ENCODE measurements at regions of chr6 and their contacts with region 1.

Region 1: DNA sequence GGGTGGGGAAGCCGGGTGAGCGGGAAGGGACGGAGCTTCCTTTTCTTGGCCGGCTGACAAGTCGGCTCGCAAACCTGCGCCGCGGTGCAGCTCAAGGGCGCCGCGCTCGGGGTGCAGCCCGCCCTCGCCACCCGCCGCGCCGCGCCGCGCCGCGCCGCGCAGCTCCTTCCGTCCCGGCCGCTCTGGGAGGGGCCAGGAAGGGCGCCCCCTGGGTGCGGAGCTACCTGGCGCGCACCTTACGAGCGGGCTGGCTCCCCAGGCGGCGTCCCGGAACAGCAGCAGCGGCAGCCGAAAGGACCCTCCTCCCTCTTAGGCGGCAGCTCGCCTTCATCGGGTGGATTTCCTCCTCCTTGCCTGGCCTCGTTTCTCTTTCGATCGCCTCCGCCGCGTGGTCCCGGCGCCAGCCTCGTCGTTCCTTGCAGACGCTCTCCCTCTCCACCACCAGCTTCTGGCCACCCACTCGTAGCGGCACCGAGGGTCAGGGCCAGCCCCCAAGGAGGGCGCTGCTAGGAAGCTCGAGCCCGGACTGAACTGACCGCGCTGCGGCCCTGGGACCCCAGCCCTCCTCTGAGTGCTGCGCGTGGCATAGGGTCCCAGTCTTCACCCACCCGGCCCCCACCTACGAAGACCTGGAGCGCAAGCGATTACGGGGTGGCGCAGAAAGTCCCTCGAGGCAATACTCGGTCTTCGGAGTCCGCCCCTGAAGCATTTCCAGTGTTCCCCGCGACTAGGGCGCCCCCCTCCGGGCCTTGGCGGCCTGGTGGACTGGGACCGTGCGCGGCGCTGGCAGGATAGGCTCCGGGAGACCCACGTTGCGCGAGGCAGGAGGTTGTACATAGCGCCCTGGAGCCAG is at the start of gene MAP3K5:
- DNase-seq: peak; percentile 97
- ATAC-seq: peak; percentile 92
- H3K4me3 ChIP-seq: peak within 1 kb of the TSS; percentile 92
- H3K27ac ChIP-seq: peak within 1 kb of the TSS; percentile 98
- H3K4me1 ChIP-seq: peaks cover 14% of the 10 kb centered on the region
- H3K27me3 ChIP-seq: no peaks in the 10 kb centered on the region
- CTCF ChIP-seq: peak; percentile 83
- total RNA-seq, gene MAP3K5: 32.5 TPM

Region 2: DNA sequence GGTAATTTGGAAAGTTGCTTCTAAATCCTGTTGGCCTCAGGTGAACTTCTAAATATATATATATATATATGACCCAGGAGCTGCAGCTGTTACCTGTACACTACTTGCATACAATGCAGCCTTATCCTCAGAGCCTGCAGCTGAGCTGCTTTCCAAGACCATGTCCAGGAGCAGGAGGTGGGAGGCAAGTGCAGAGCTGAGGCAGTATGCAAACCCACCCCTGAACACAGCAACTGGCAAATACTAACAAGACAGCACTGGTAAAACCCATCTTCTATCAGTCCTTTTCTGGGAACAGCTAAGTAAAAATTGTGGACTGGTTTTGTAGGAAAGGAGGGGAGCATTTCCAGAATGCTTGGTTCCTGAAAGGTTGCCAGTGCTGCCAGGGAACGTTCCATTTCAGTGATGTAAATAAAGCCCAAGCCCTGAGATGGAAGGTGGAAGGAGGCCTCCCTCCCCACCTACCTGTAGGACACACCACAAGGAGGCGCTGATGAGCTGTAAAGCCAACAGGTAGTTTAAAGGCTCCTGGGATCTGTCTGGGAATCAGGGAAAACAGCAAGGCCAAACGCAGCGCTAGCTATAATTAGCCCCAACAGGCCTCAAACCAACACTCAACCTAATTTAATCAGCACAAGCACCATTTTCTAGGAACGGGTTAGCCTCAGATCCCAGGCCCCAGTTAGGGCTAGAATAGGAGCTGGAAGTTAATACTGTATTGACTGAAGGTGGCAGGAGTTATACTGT is 148.6 kb before region 1 on chr6:
- intact Hi-C with region 1: loop called (anchors 5 kb)
- DNase-seq: peak; percentile 89
- ATAC-seq: peak; percentile 99
- H3K4me3 ChIP-seq: no peak overlapping the region
- H3K27ac ChIP-seq: peak overlapping the region; percentile 24
- H3K4me1 ChIP-seq: peaks cover 27% of the 10 kb centered on the region
- H3K27me3 ChIP-seq: no peaks in the 10 kb centered on the region
- CTCF ChIP-seq: peak; percentile 95

Region 3: GRCh38 chr6:136737871-136738691 is 54.6 kb before region 1 on chr6:
- intact Hi-C with region 1: no loop called
- DNase-seq: no peak
- ATAC-seq: peak; percentile 58
- H3K4me3 ChIP-seq: peak overlapping the region; percentile 11
- H3K27ac ChIP-seq: peak overlapping the region; percentile 75
- H3K4me1 ChIP-seq: peaks cover 37% of the 10 kb centered on the region
- H3K27me3 ChIP-seq: no peaks in the 10 kb centered on the region
- CTCF ChIP-seq: no peak

Region 4: GRCh38 chr6:137122610-137123009 is 330.0 kb after region 1 on chr6:
- intact Hi-C with region 1: no loop called
- DNase-seq: no peak
- ATAC-seq: no peak
- H3K4me3 ChIP-seq: no peak overlapping the region
- H3K27ac ChIP-seq: no peak overlapping the region
- H3K4me1 ChIP-seq: no peaks in the 10 kb centered on the region
- H3K27me3 ChIP-seq: no peaks in the 10 kb centered on the region
- CTCF ChIP-seq: no peak

Measured in upper lobe of right lung (tissue), 1 donor.